ENCODE measurements at regions of chr4 and their contacts with region 1.

Region 1: DNA sequence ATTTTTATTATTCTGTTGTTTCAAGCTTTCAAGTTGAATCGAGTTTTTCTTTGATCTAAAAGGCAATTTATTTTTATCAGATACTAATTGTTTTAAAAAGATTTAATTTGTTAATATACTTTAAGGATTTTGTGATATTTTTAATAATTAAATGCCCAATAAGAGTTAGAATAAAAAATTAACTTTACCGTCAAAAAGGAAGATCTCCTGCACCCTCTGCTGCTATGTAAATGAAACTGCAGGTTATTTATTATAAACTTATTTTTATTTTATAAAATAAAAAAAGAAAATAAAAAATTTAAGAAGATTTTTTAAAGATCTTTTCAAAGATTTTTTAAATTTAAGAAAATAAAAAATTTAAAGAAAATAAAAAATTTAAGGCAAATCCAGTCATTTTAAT is 166.1 kb downstream of the CCSER1 start:
- DNase-seq: no peak
- H3K4me3 ChIP-seq: no peak overlapping the region
- H3K4me3 Mint-ChIP-seq: no peak overlapping the region
- H3K27ac Mint-ChIP-seq: no peak overlapping the region
- H3K4me1 ChIP-seq: no peaks in the 10 kb centered on the region
- H3K4me1 Mint-ChIP-seq: no peaks in the 10 kb centered on the region
- H3K27me3 ChIP-seq: no peaks in the 10 kb centered on the region
- H3K27me3 Mint-ChIP-seq: peaks cover under 1% of the 10 kb centered on the region
- CTCF ChIP-seq: peak; percentile 33 to 61

Region 2: DNA sequence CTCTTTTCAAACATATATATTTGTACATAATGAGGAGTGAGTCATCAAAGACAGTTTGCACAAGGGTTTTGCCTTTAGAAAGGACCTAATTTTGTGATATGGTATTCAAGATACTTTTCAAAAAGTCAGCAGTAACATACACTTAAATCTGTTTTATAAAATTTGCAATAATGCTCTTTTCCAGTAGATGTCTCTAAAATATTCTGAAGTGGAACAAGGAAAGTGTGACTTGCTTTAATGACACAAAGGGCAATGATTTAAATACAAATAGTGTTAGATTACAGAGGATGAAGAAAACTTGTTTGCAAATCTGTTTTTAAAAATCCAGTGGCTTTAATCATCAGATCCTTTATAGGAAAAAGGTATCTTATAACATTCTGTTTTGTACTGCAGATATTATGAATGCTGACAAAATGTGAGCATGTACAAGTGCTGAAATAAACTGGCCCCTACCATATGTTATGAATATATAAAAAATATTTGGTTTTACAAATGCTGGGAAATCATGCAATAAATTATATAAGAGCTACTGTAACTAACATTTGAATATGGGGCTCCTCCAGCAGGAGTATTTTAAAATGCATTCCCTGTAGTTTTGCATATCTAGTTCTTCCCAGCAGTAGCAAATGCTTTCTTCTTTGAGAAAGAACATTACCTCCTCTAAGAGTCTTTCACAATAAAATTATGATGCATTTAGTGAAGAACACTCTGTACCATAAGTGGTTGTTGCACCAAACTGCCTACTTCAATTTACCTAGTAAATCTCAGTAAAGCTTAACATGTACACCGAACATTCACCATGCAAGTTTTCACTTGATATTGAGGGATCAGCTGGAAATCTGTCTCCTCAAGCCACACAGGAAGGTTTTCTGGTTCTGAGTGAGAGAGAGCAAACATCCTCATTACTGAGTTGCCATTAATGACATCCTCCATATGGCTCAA is 378.4 kb before region 1 on chr4:
- CTCF ChIA-PET with region 1: no interaction called
- POLR2A ChIA-PET with region 1: no interaction called
- intact Hi-C with region 1: loop called (anchors 1 kb)
- DNase-seq: no peak
- H3K4me3 ChIP-seq: no peak overlapping the region
- H3K4me3 Mint-ChIP-seq: no peak overlapping the region
- H3K27ac Mint-ChIP-seq: no peak overlapping the region
- H3K4me1 ChIP-seq: 0 out of 2 replicates have a peak, but pooled peaks cover 3% of the 10 kb centered on the region
- H3K4me1 Mint-ChIP-seq: peaks cover 6% of the 10 kb centered on the region
- H3K27me3 ChIP-seq: no peaks in the 10 kb centered on the region
- H3K27me3 Mint-ChIP-seq: peaks cover 2% of the 10 kb centered on the region
- CTCF ChIP-seq: no peak

Region 3: DNA sequence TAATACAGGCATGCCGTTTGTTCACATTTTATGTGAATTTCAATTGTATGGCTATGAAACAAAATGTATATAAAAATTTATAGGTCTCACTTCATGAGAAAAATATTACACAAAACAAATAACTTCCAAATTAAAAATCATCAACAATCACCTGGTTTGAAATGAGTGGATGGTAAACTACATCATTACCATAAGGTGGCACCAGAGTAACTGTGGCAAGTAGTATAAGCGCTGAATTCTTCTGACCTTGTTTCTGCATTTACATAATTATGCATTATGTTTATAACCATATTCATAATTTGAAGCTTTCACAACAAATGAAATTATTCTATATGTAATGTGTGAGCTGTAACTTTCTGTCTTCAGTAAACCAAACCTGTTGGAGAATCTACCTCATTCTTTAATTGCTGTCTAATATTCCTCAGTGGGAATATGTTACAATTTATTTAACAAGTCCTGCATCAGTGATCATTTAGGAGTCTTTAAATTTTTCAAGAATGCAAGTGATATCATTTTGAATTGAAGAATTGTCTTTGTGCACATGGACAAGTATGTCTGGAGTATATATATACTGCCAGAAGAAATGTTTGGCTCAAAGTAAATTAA is 343.4 kb before region 1 on chr4:
- CTCF ChIA-PET with region 1: no interaction called
- POLR2A ChIA-PET with region 1: no interaction called
- intact Hi-C with region 1: loop called (anchors 1 kb)
- DNase-seq: no peak
- H3K4me3 ChIP-seq: no peak overlapping the region
- H3K4me3 Mint-ChIP-seq: no peak overlapping the region
- H3K27ac Mint-ChIP-seq: no peak overlapping the region
- H3K4me1 ChIP-seq: no peaks in the 10 kb centered on the region
- H3K4me1 Mint-ChIP-seq: no peaks in the 10 kb centered on the region
- H3K27me3 ChIP-seq: no peaks in the 10 kb centered on the region
- H3K27me3 Mint-ChIP-seq: no peaks in the 10 kb centered on the region
- CTCF ChIP-seq: peak; percentile 36 to 37

Region 4: DNA sequence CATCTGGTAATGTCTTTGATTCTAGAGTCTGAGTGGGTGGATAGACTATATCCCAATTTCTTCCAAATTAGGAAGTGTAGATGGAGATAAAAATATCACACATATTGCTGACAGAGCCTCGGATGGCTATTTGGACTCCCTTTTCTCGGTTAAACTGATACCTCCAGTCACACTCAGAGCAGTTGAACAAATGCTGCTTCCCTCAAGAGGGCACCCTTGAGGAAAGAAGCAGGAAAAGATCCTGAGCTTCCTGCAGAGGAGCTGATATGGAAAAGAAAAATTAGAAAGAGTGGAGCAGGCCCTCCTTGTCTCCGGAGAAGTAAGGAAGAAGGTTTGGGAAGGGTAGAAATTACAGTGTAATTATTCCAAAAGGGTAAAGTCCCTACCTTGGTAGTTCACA is 262.4 kb before region 1 on chr4:
- CTCF ChIA-PET with region 1: interaction called, 4 read pairs
- POLR2A ChIA-PET with region 1: no interaction called
- intact Hi-C with region 1: loop called (anchors 1 kb)
- DNase-seq: peak in 1 of 2 experiments; percentile 44
- H3K4me3 ChIP-seq: no peak overlapping the region
- H3K4me3 Mint-ChIP-seq: no peak overlapping the region
- H3K27ac Mint-ChIP-seq: no peak overlapping the region
- H3K4me1 ChIP-seq: no peaks in the 10 kb centered on the region
- H3K4me1 Mint-ChIP-seq: no peaks in the 10 kb centered on the region
- H3K27me3 ChIP-seq: no peaks in the 10 kb centered on the region
- H3K27me3 Mint-ChIP-seq: no peaks in the 10 kb centered on the region
- CTCF ChIP-seq: peak; percentile 32 to 37

Region 5: DNA sequence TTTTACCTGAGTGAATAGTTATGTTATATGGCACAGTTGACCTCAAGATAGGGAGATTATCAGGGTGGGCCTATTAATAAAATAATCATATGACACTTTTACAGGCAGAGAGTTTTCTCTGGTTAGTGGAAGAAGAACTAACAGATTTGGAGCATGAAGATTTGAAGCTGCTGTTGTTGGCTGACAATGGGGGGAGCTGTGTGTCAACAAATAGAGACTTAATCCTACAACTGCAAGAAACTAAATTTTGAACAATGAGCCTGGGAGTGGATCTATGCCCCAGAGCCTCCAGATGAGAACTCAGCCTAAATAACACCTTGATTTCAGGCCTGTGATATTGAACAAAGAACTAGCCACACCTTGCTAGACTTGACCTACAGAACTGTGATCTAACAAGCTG is 173.3 kb before region 1 on chr4:
- CTCF ChIA-PET with region 1: no interaction called
- POLR2A ChIA-PET with region 1: no interaction called
- intact Hi-C with region 1: loop called (anchors 1 kb)
- DNase-seq: no peak
- H3K4me3 ChIP-seq: no peak overlapping the region
- H3K4me3 Mint-ChIP-seq: no peak overlapping the region
- H3K27ac Mint-ChIP-seq: no peak overlapping the region
- H3K4me1 ChIP-seq: no peaks in the 10 kb centered on the region
- H3K4me1 Mint-ChIP-seq: no peaks in the 10 kb centered on the region
- H3K27me3 ChIP-seq: no peaks in the 10 kb centered on the region
- H3K27me3 Mint-ChIP-seq: peaks cover 9% of the 10 kb centered on the region
- CTCF ChIP-seq: no peak

Region 6: DNA sequence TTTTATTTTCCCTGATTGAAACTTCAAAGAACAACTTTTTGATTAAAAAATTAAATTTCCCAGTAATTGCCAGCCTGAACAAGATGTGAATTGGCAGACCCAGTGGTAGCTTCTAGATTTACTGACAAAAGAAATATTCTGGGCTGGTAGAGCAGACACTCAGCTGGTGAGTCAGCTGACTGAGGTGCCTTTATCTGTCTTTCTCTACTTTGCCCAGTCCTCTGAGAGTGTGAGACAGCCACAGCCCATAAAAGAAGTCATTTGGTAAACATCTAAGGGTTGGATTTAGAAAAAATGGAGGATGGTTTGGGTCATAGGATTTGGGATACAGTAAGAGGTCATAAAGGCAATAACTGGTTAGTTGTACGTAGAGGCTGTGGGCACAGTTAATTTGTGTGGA is 111.7 kb before region 1 on chr4:
- CTCF ChIA-PET with region 1: no interaction called
- POLR2A ChIA-PET with region 1: no interaction called
- intact Hi-C with region 1: loop called (anchors 5 kb)
- DNase-seq: peak in 1 of 2 experiments; percentile 7
- H3K4me3 ChIP-seq: no peak overlapping the region
- H3K4me3 Mint-ChIP-seq: peak overlapping the region; percentile 5
- H3K27ac Mint-ChIP-seq: no peak overlapping the region
- H3K4me1 ChIP-seq: peaks cover 27% of the 10 kb centered on the region
- H3K4me1 Mint-ChIP-seq: peaks cover 26% of the 10 kb centered on the region
- H3K27me3 ChIP-seq: no peaks in the 10 kb centered on the region
- H3K27me3 Mint-ChIP-seq: no peaks in the 10 kb centered on the region
- CTCF ChIP-seq: no peak

Measured in Caco-2 (cell line).